WTC11 (cell line): ENCODE measurements at regions of chr5 and their contacts with region 1.

Region 1: GRCh38 chr5:139711067-139711905 is 63.1 kb downstream of the CXXC5 start:
- DNase-seq: peak; percentile 75
- ATAC-seq: peak; percentile 10
- H3K4me3 Mint-ChIP-seq: peak overlapping the region; percentile 71
- H3K27ac Mint-ChIP-seq: peak overlapping the region; percentile 45
- H3K4me1 Mint-ChIP-seq: peaks cover 37% of the 10 kb centered on the region
- H3K27me3 Mint-ChIP-seq: peaks cover 7% of the 10 kb centered on the region
- CTCF ChIP-seq: no peak

Region 2: DNA sequence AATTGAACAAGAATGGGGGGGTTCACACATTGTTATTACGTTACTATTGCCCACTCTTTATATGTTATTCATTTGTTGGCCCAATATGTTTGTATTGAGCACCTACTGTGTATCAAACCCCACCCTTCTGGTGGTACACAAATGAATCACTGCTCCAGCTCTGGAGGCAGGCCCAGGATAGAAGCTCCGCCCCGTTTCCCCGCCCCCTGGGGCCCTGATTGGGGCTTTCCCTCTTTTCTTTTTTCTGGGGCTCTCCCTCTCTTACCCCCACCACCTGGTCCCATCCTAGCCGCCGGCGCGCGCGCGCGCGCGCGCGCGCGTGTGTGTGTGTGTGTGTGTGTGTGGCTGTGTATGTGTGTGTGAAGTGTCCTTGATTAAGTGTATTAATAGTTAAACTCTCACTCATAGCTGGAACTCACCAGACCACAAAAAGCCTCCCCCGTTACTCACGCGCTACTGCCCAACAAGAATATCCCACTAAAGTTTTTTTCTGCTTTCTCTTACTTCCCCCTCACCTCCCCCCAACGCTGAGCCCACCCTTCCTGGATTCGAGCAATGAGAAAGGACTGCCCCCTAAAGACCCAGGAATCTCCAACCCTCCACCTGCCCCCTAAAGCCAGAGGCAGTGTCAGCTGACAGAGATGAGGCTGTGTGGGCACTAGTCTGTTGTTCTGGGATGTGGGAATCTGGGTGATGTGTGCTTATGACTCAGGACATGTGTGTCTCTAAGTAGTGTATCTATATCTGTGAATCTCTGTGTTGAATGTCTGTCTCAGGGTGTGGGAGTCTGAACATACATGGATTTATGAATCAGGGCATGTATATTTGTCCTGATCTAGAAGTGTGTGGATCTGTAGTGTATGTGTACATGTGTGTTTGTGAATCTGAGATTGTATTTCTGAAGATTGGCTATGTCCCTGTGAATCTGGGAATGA is 59.2 kb before region 1 on chr5:
- CTCF ChIA-PET with region 1: interaction called, 57 read pairs
- POLR2A ChIA-PET with region 1: interaction called, 27 read pairs
- DNase-seq: peak; percentile 92
- ATAC-seq: peak; percentile 33
- H3K4me3 Mint-ChIP-seq: peak overlapping the region; percentile 98
- H3K27ac Mint-ChIP-seq: peak overlapping the region; percentile 96
- H3K4me1 Mint-ChIP-seq: peaks cover 63% of the 10 kb centered on the region
- H3K27me3 Mint-ChIP-seq: no peaks in the 10 kb centered on the region
- CTCF ChIP-seq: no peak

Region 3: GRCh38 chr5:139678751-139679750 is 32.2 kb before region 1 on chr5:
- CTCF ChIA-PET with region 1: interaction called, 17 read pairs
- POLR2A ChIA-PET with region 1: interaction called, 6 read pairs
- DNase-seq: peak; percentile 38
- ATAC-seq: peak; percentile 50
- H3K4me3 Mint-ChIP-seq: no peak overlapping the region
- H3K27ac Mint-ChIP-seq: no peak overlapping the region
- H3K4me1 Mint-ChIP-seq: peaks cover 48% of the 10 kb centered on the region
- H3K27me3 Mint-ChIP-seq: no peaks in the 10 kb centered on the region
- CTCF ChIP-seq: no peak

Region 4: GRCh38 chr5:139684881-139685749 is 26.2 kb before region 1 on chr5:
- CTCF ChIA-PET with region 1: interaction called, 27 read pairs
- POLR2A ChIA-PET with region 1: interaction called, 23 read pairs
- DNase-seq: no peak
- ATAC-seq: no peak
- H3K4me3 Mint-ChIP-seq: no peak overlapping the region
- H3K27ac Mint-ChIP-seq: no peak overlapping the region
- H3K4me1 Mint-ChIP-seq: peaks cover 70% of the 10 kb centered on the region
- H3K27me3 Mint-ChIP-seq: no peaks in the 10 kb centered on the region
- CTCF ChIP-seq: no peak

Region 5: GRCh38 chr5:139690064-139690802 is 21.1 kb before region 1 on chr5:
- CTCF ChIA-PET with region 1: interaction called, 27 read pairs
- POLR2A ChIA-PET with region 1: interaction called, 89 read pairs
- DNase-seq: no peak
- ATAC-seq: peak; percentile 11
- H3K4me3 Mint-ChIP-seq: peak overlapping the region; percentile 24; the same call in 1 of the 2 replicates
- H3K27ac Mint-ChIP-seq: peak overlapping the region; percentile 19; the same call in 1 of the 2 replicates
- H3K4me1 Mint-ChIP-seq: peaks cover 63% of the 10 kb centered on the region
- H3K27me3 Mint-ChIP-seq: peaks cover 24% of the 10 kb centered on the region
- CTCF ChIP-seq: no peak

Region 6: DNA sequence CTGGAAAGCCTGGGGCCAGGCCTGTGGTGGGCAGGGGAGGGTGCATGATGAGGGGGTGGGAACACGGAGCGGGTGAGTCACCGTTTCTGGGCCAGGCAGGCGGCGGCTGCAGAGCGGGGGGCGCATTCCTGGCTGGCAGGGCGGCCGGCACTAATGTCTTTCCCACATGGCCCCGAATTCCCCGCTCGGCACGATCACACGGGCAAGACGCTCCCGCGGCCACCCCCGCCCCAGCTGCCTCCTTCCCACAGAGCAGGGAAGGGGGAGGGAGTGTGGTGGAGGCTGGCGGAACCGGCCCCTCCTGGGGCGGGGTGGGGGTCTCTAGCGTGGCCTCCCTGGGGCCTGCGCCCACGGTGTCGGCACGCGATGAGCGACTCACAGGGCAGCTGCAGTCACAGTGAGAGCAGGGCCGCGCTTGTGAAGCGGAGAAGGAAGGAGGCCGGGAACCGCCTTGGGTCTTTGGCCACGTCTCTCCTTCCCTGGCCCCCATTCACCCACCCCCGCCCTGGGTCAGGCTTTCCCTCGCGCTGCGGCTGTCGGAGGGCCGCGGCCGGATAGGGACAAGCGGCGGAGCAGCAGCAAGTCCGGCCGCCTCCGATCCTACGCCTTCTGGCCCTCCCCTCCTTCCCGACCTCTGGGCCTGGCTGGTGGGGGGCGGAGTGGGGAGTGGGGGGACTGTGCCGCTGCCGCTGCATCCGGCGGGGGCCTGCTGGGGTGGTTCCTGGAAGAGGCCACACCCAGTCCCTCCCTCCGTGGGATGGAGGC is 14.2 kb before region 1 on chr5:
- CTCF ChIA-PET with region 1: interaction called, 86 read pairs
- POLR2A ChIA-PET with region 1: interaction called, 89 read pairs
- DNase-seq: peak; percentile 77
- ATAC-seq: peak; percentile 23
- H3K4me3 Mint-ChIP-seq: peak overlapping the region; percentile 66
- H3K27ac Mint-ChIP-seq: peak overlapping the region; percentile 88; the same call in 1 of the 2 replicates
- H3K4me1 Mint-ChIP-seq: peaks cover 60% of the 10 kb centered on the region
- H3K27me3 Mint-ChIP-seq: peaks cover 28% of the 10 kb centered on the region
- CTCF ChIP-seq: no peak

Region 7: DNA sequence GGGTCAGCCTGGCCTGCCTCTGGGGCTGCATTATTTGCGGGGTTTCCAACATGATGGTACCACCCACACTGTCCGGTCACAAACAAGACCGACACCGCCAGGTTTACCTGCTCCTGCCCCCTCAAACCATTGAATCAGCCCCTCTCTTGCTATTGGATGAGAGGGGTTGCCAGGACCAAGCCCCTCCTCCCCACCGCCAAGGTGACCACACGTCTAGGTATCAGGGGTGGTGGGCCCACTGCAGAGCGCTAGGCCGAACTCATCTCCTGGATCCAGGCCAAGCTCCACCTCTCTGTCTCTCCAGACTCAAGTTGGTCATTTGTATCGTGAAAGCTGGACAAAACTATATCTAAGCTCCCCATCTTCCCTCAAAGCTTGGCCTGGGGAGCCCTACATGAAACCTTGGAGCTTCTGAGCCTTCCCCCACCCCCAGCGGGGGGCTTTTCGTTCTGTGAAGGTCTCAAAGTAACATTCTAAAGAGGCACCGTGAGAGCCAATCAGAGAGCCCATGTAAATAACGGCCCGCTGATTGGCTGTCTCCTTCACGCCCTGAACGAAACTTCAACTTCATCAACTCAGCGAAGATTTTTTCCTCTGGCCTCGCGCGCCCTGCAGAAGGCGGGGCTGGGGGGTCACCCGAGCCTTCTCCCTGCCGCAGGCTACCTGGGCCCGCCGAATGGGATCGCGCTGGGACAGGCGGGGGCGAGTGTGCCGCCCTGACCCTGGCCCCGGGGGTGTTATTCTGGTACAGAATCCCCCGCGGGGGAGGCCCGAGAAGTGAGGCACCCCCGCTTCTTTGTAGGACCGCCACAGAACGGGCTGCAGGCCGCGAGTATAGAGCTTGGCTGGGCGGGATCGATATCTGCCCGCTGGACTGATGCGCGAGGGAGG is 34.8 kb after region 1 on chr5:
- CTCF ChIA-PET with region 1: interaction called, 13 read pairs
- POLR2A ChIA-PET with region 1: interaction called, 26 read pairs
- DNase-seq: peak; percentile 88
- ATAC-seq: peak; percentile 72
- H3K4me3 Mint-ChIP-seq: peak overlapping the region; percentile 77
- H3K27ac Mint-ChIP-seq: peak overlapping the region; percentile 93; the same call in 1 of the 2 replicates
- H3K4me1 Mint-ChIP-seq: peaks cover 52% of the 10 kb centered on the region
- H3K27me3 Mint-ChIP-seq: peaks cover 64% of the 10 kb centered on the region
- CTCF ChIP-seq: no peak